BJ (cell line): ENCODE measurements at regions of chr1 and their contacts with region 1.

Region 1: GRCh38 chr1:150561974-150562445 is 12.8 kb downstream of the ADAMTSL4 start:
- DNase-seq: peak; percentile 69
- H3K4me3 ChIP-seq: peak overlapping the region; percentile 34
- H3K27me3 ChIP-seq: no peaks in the 10 kb centered on the region
- CTCF ChIP-seq: no peak

Region 2: GRCh38 chr1:150332651-150333290 is 229.2 kb before region 1 on chr1:
- CTCF ChIA-PET with region 1: no interaction called
- POLR2A ChIA-PET with region 1: no interaction called
- DNase-seq: no peak
- H3K4me3 ChIP-seq: no peak overlapping the region
- H3K27me3 ChIP-seq: no peaks in the 10 kb centered on the region
- CTCF ChIP-seq: no peak

Region 3: GRCh38 chr1:150486964-150487762 is 74.8 kb before region 1 on chr1 and contains the start of gene TARS2:
- CTCF ChIA-PET with region 1: interaction called, 23 read pairs
- POLR2A ChIA-PET with region 1: no interaction called
- DNase-seq: peak; percentile 90
- H3K4me3 ChIP-seq: peak within 1 kb of the TSS; percentile 71
- H3K27me3 ChIP-seq: no peaks in the 10 kb centered on the region
- CTCF ChIP-seq: 0 out of 2 replicates have a peak, but pooled peaks have one; percentile 16
- polyA plus RNA-seq, gene TARS2: 12.6 and 17.7 TPM in 2 replicates

Region 4: DNA sequence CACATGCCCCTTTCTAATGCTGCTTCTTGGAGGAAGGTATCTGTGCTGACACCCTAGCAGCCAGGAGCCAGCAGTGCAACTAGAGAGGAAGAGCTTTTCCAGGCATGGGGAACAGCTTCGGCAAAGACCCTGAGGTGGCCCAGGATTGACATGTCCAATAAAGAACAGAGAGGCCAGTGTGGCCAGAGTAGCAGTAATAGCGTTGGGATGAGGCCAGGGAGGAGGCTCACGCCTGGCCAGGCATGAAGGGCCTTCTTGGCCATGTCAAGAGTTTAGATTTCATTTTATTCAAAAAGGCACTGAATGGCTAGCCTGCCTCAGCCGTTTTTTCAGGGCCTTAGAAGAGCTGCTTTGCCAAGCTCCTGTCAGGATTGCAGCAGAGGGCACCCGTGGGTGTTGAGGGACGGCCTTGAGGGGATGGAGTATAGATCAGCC is 29.1 kb before region 1 on chr1:
- CTCF ChIA-PET with region 1: interaction called, 17 read pairs
- POLR2A ChIA-PET with region 1: no interaction called
- DNase-seq: no peak
- H3K4me3 ChIP-seq: no peak overlapping the region
- H3K27me3 ChIP-seq: no peaks in the 10 kb centered on the region
- CTCF ChIP-seq: no peak

Region 5: GRCh38 chr1:150578965-150579798 is 17.2 kb after region 1 on chr1 and contains the start of gene MCL1:
- CTCF ChIA-PET with region 1: interaction called, 72 read pairs
- POLR2A ChIA-PET with region 1: interaction called, 22 read pairs
- DNase-seq: peak; percentile 79
- H3K4me3 ChIP-seq: peak within 1 kb of the TSS; percentile 74
- H3K27me3 ChIP-seq: no peaks in the 10 kb centered on the region
- CTCF ChIP-seq: 0 out of 2 replicates have a peak, but pooled peaks have one; percentile 11
- polyA plus RNA-seq, gene MCL1: 45.4 and 80.5 TPM in 2 replicates

Region 6: GRCh38 chr1:150621497-150622302 is 59.7 kb after region 1 on chr1:
- CTCF ChIA-PET with region 1: interaction called, 121 read pairs
- POLR2A ChIA-PET with region 1: no interaction called
- DNase-seq: no peak
- H3K4me3 ChIP-seq: no peak overlapping the region
- H3K27me3 ChIP-seq: no peaks in the 10 kb centered on the region
- CTCF ChIP-seq: peak; percentile 79

Region 7: GRCh38 chr1:150808121-150808520 is 246.1 kb after region 1 on chr1 and contains the start of gene CTSK:
- CTCF ChIA-PET with region 1: interaction called, 17 read pairs
- POLR2A ChIA-PET with region 1: interaction called, 15 read pairs
- DNase-seq: no peak
- H3K4me3 ChIP-seq: peak within 1 kb of the TSS; percentile 30
- H3K27me3 ChIP-seq: no peaks in the 10 kb centered on the region
- CTCF ChIP-seq: no peak
- polyA plus RNA-seq, gene CTSK: 70.7 and 91.1 TPM in 2 replicates

Region 8: GRCh38 chr1:150836129-150836773 is 274.2 kb after region 1 on chr1:
- CTCF ChIA-PET with region 1: no interaction called
- POLR2A ChIA-PET with region 1: no interaction called
- DNase-seq: no peak
- H3K4me3 ChIP-seq: no peak overlapping the region
- H3K27me3 ChIP-seq: no peaks in the 10 kb centered on the region
- CTCF ChIP-seq: no peak